Activated naive CD4-positive, alpha-beta T cell treated with anti-CD3 and anti-CD28 coated beads for 36 hours (primary cell): ENCODE measurements at regions of chr2 and their contacts with region 1.

Region 1: DNA sequence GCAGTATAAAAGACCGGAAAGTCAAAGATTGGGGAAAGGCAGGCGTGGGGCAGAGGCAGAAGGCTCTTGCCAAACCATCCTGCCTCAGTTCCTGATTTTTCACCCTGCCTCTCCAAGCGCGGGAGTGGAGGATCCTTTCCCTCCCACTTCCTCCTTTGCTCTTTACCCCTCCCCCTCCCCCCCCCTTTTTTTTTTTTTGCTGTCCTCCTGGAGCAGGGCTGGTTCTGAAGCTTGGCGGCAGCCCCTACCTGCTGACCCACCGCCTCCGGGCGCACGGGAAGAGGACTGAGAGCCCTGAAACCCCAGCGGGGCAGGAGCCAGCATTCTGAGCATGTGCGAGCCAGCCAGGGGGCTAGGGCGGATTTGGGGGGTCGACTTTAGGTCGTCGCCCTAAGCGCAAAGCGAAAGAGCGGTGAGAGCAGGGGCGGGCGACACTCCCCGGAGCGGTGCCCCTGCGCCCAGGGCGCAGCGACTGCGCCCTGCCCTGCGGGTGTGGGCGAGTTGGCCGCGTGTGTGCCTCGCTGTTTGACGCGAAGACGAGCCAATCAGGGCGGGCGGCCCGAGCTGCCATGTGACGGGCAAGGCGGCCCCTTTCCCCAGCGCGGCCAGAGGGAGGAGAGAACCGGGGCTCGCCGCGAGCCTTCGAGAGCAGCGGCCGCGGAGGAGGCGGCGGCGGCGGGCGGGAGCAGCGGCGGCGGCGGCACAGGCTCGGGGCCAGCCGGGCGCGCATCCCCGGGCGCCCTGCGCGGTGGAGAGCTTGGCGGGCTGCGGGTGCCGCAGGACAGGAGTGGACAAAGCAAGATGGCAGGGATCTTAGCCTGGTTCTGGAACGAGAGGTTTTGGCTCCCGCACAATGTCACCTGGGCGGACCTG is at the start of gene CERS6:
- DNase-seq: peak; percentile 93
- H3K4me3 Mint-ChIP-seq: no peak within 1 kb of the TSS
- H3K27ac Mint-ChIP-seq: peak within 1 kb of the TSS; percentile 59
- H3K4me1 Mint-ChIP-seq: peaks cover 35% of the 10 kb centered on the region
- H3K27me3 Mint-ChIP-seq: no peaks in the 10 kb centered on the region
- total RNA-seq, gene CERS6: 9.7 to 10.0 TPM

Region 2: DNA sequence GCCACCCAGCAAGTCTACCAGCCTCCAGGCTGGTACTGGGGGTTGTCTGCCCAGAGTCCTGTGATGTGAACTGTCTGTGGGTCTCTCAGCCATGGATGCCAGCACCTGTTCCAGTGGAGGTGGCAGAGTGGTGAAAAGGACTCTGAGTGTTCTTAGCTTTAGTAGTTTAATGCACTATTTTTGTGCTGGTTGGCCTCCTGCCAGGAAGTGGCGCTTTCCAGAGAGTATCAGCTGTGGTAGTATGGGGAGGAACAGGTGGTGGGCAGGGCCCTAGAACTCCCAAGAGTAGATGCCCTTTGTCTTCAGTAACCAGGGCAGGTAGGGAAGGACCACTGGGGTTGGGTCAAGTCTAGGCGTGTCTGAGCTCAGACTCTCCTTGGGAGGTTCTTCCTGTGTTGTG is 565.1 kb before region 1 on chr2:
- CTCF ChIA-PET with region 1: no interaction called
- intact Hi-C with region 1: no loop called
- DNase-seq: no peak
- H3K4me3 Mint-ChIP-seq: no peak overlapping the region
- H3K27ac Mint-ChIP-seq: no peak overlapping the region
- H3K4me1 Mint-ChIP-seq: no peaks in the 10 kb centered on the region
- H3K27me3 Mint-ChIP-seq: peaks cover 19% of the 10 kb centered on the region

Region 3: GRCh38 chr2:168025487-168026202 is 430.2 kb before region 1 on chr2:
- CTCF ChIA-PET with region 1: no interaction called
- intact Hi-C with region 1: no loop called
- DNase-seq: no peak
- H3K4me3 Mint-ChIP-seq: no peak overlapping the region
- H3K27ac Mint-ChIP-seq: no peak overlapping the region
- H3K4me1 Mint-ChIP-seq: no peaks in the 10 kb centered on the region
- H3K27me3 Mint-ChIP-seq: no peaks in the 10 kb centered on the region

Region 4: DNA sequence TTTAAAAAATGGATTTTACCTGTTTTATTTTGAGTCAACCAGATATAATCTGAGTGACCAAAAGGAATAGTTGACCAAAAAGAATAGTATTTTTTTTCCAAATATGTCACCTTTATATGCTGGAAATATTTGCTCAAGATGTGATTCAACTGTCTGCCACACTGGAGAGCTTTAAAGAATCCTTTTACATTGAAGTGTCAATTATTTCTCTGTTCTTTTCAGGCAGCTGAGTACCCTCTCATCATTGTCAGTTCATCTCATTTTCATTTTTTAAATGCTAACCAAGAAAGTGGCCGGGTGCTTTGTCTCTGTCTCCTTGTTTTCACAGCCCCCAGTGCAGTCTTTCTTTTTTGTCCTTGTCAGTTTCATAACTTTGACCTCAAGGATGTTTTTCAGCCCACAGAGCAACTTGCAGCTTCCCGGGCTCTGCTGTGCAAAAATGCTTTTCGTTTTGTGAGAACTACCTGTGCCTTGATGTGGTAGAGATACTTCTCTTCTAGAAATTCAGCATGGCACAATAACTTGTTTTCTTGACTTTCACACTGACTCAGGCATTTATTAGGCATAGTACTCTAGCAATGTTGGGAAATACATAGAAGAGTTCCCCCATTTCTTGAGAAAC is 23.2 kb before region 1 on chr2:
- CTCF ChIA-PET with region 1: interaction called, 5 read pairs
- intact Hi-C with region 1: loop called (anchors 1 kb)
- DNase-seq: peak; percentile 46
- H3K4me3 Mint-ChIP-seq: no peak overlapping the region
- H3K27ac Mint-ChIP-seq: peak overlapping the region; percentile 25
- H3K4me1 Mint-ChIP-seq: peaks cover 42% of the 10 kb centered on the region
- H3K27me3 Mint-ChIP-seq: no peaks in the 10 kb centered on the region

Region 5: DNA sequence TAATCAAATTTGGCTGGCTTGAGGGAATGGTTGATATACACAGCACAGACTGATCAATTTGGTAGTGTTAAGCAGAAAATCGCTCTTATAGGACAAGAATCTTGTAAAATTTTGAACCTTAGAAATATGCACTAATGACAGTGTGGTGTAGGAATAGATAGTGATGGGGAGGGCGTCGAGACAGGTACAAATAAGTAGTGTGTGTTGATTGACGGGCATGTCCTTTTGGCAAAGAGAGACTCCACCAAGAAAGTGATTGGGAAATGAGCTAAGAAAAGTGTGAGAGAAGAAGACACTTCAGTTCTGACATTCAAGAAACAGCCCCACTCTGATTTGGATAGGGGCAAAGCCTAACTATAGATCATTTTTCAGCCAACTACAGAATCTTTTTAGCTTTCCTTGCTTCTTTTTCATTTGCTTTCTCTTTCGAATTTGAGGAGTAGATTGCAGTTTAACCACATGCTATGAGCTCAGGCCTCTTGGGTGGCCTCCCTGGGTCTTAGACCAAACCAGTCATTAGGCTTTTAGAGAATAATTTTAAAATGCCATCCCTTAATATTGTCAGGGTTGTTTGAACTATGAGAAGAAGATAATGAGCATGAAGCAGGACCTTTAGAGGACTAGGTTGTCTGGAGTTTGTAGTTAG is 127.3 kb after region 1 on chr2:
- CTCF ChIA-PET with region 1: no interaction called
- intact Hi-C with region 1: loop called (anchors 1 kb)
- DNase-seq: peak; percentile 20
- H3K4me3 Mint-ChIP-seq: no peak overlapping the region
- H3K27ac Mint-ChIP-seq: peak overlapping the region; percentile 20
- H3K4me1 Mint-ChIP-seq: peaks cover 62% of the 10 kb centered on the region
- H3K27me3 Mint-ChIP-seq: no peaks in the 10 kb centered on the region

Region 6: DNA sequence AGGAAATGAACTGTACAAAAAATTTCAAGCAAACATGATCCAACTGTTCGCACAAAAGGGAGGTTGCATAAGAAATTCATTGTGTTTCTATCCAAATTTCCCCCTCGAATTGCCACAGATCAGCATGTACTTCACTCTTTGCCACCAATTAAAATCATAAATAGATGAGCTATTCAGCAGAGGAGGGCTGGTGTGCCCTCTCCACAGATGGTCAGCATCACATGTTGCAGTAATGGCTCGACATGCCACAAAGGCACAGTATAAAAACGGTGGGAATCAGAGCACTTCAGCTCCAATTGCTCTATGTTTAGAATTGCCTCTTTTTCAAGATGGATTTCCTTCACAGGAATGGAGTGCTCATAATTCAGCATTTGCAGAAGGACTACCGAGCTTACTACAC is 445.1 kb after region 1 on chr2 and contains the start of gene G6PC2:
- CTCF ChIA-PET with region 1: no interaction called
- intact Hi-C with region 1: no loop called
- DNase-seq: no peak
- H3K4me3 Mint-ChIP-seq: no peak within 1 kb of the TSS
- H3K27ac Mint-ChIP-seq: no peak within 1 kb of the TSS
- H3K4me1 Mint-ChIP-seq: no peaks in the 10 kb centered on the region
- H3K27me3 Mint-ChIP-seq: peaks cover 12% of the 10 kb centered on the region
- total RNA-seq, gene G6PC2: not detected

Region 7: GRCh38 chr2:168912901-168913369 is 457.1 kb after region 1 on chr2:
- CTCF ChIA-PET with region 1: no interaction called
- intact Hi-C with region 1: loop called (anchors 10 kb)
- DNase-seq: peak; percentile 10
- H3K4me3 Mint-ChIP-seq: peak overlapping the region; percentile 43
- H3K27ac Mint-ChIP-seq: no peak overlapping the region
- H3K4me1 Mint-ChIP-seq: peaks cover 12% of the 10 kb centered on the region
- H3K27me3 Mint-ChIP-seq: peaks cover 20% of the 10 kb centered on the region

Region 8: DNA sequence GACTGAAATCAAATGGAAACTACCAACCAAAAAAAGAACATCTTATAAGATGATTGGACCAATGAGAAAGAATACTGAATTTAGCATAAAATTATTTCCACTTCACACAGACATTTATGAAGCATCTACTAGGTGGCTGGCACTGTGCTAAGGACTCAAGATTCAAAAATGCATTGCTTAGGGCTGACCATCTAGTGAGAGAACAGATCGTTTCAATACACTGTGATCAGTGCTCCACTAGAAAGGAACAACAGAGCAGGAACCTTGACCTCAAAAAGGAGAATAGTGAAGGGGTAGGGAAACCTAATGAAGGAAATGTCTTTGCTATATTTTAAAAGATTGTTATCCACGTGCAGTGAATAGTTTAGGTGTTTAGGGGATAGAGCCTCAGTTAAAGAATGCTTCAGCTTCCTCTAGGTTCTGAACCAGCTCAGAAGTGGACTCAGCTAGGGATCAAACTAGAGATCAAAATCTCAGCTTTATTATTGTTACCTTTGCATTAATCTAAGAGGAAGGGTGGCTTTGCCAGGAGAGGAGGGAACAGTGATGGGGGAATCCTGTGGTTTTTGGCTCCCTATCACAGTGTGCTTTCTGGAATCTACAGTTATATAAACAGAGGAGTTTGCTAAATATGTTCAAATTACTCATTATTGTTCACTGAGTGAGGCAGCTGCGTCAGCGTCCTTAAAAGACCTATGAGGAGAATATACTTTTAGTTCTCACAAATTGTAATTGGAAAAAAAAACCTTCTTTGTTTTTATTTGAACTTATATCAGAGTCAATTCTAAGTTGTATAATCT is 1007.2 kb after region 1 on chr2:
- CTCF ChIA-PET with region 1: no interaction called
- intact Hi-C with region 1: no loop called
- DNase-seq: no peak
- H3K4me3 Mint-ChIP-seq: no peak overlapping the region
- H3K27ac Mint-ChIP-seq: no peak overlapping the region
- H3K4me1 Mint-ChIP-seq: no peaks in the 10 kb centered on the region
- H3K27me3 Mint-ChIP-seq: no peaks in the 10 kb centered on the region